ENCODE measurements at regions of chr3 and their contacts with region 1.

Region 1: DNA sequence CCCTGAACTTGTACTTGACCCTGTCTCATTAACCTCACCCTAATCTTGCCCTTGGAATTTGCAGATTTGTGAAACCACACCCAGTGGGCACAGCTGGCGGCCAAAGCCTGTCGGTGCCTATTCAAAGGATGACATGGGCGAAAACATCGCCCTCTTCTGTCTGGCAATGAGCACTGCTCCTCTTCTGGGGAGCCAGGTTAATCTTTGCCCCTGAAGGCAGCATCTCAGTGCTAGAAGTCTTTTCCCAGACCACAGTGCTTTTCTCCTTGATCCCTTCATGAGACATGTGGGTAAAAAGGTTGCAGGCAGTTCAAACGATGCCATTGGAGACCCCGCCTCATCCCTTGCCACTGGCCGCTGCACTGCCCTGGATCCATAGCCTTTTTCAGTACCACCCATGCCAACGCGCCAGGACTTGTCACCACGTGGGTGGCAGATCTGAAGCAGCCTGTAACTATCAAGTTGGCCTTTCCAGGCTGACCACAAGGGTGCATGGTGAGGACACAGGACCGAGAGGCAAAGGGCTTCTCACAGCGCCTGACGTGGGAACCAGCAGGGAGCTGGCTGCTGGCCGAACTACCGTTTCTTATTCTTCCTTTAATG is 6.5 kb upstream of the DNASE1L3 start:
- DNase-seq: peak; percentile 63
- H3K4me3 Mint-ChIP-seq: no peak overlapping the region
- H3K27ac Mint-ChIP-seq: no peak overlapping the region
- H3K4me1 Mint-ChIP-seq: peaks cover 28% of the 10 kb centered on the region
- H3K27me3 Mint-ChIP-seq: peaks cover 5% of the 10 kb centered on the region

Region 2: GRCh38 chr3:58188173-58188564 is 29.1 kb before region 1 on chr3:
- CTCF ChIA-PET with region 1: interaction called, 82 read pairs
- POLR2A ChIA-PET with region 1: no interaction called
- DNase-seq: no peak
- H3K4me3 Mint-ChIP-seq: no peak overlapping the region
- H3K27ac Mint-ChIP-seq: no peak overlapping the region
- H3K4me1 Mint-ChIP-seq: no peaks in the 10 kb centered on the region
- H3K27me3 Mint-ChIP-seq: no peaks in the 10 kb centered on the region

Region 3: DNA sequence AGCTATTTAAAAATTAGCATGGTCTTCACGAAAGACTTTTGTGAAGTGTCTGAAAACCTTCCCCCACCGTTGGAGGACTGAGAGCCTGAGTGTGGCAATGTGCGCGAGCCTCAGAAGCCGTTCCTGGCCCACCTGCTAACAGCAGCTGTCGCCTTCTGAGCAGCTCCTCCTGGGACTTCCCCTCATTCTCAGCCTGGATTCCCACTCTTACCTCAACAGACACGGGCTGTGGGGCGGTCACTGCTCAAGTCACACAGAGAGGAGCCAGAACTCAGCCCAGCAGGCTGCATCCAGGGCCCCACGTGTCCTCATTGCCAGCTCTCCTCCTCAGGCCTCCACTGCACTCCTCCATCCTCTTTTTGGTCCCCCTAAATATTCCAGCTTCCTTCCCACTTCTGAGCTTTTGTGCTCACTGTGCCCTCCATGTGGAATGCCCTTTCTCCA is 14.4 kb before region 1 on chr3:
- CTCF ChIA-PET with region 1: interaction called, 20 read pairs
- POLR2A ChIA-PET with region 1: no interaction called
- DNase-seq: no peak
- H3K4me3 Mint-ChIP-seq: no peak overlapping the region
- H3K27ac Mint-ChIP-seq: no peak overlapping the region
- H3K4me1 Mint-ChIP-seq: peaks cover 6% of the 10 kb centered on the region
- H3K27me3 Mint-ChIP-seq: peaks cover 21% of the 10 kb centered on the region

Region 4: DNA sequence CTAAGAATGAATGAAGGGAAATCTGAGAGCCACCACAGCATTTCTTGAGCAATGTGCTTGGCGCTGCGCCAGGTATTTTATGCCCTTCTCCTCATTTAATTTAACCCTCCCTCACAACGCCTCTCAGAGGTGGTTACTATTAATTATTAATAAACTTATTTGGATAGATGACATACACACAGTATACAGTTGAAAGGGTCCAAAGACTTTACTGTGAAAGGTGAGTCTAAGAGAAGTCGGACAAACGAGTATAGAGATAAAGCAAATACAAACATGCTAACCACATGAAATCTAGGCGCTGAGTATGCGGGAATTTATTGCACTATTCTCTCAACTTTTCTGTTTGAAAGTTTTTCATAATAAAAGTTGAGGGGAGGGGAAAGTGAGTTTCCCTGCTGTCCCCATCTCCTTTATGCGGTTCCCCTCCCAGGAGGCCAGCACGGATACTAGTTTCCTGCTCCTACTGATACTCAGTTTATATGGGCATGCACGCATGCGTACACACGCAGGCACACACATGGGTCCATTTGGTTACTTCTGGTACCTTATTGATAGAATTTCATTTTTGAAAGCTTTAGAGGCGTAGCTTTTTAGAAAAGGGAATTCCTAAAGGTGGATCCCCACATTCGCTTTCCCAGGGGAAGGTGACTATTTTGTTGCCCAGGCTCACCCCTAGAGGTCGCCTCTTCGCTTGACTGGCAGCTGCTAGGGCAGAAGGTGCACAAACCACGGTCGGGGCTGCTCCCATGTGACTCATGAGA is 246.1 kb after region 1 on chr3:
- CTCF ChIA-PET with region 1: no interaction called
- POLR2A ChIA-PET with region 1: no interaction called
- DNase-seq: peak; percentile 78
- H3K4me3 Mint-ChIP-seq: no peak overlapping the region
- H3K27ac Mint-ChIP-seq: peak overlapping the region; percentile 40
- H3K4me1 Mint-ChIP-seq: peaks cover 21% of the 10 kb centered on the region
- H3K27me3 Mint-ChIP-seq: no peaks in the 10 kb centered on the region